Panc1 (cell line): ENCODE measurements at regions of chr12 and their contacts with region 1.

Region 1: GRCh38 chr12:65891987-65892481 is 67.8 kb downstream of the HMGA2 start:
- DNase-seq: peak; percentile 95
- ATAC-seq: peak; percentile 83
- H3K4me3 ChIP-seq: peak overlapping the region; percentile 1 to 46; a peak in 3 of 4 replicates
- H3K27ac ChIP-seq: peak overlapping the region; percentile 100
- H3K4me1 ChIP-seq: peaks cover 88% of the 10 kb centered on the region
- H3K27me3 ChIP-seq: no peaks in the 10 kb centered on the region
- CTCF ChIP-seq: no peak

Region 2: GRCh38 chr12:65259501-65259900 is 632.5 kb before region 1 on chr12:
- CTCF ChIA-PET with region 1: no interaction called
- POLR2A ChIA-PET with region 1: no interaction called
- in situ Hi-C with region 1: no loop called
- intact Hi-C with region 1: no loop called
- DNase-seq: no peak
- ATAC-seq: no peak
- H3K4me3 ChIP-seq: no peak overlapping the region
- H3K27ac ChIP-seq: no peak overlapping the region
- H3K4me1 ChIP-seq: no peaks in the 10 kb centered on the region
- H3K27me3 ChIP-seq: no peaks in the 10 kb centered on the region
- CTCF ChIP-seq: no peak

Region 3: GRCh38 chr12:65948320-65949008 is 56.4 kb after region 1 on chr12:
- CTCF ChIA-PET with region 1: no interaction called
- POLR2A ChIA-PET with region 1: interaction called, 3 read pairs
- in situ Hi-C with region 1: no loop called
- intact Hi-C with region 1: loop called (anchors 5 kb)
- DNase-seq: peak; percentile 97
- ATAC-seq: peak; percentile 89
- H3K4me3 ChIP-seq: peak overlapping the region; percentile 17 to 40
- H3K27ac ChIP-seq: peak overlapping the region; percentile 96
- H3K4me1 ChIP-seq: peaks cover 86% of the 10 kb centered on the region
- H3K27me3 ChIP-seq: no peaks in the 10 kb centered on the region
- CTCF ChIP-seq: no peak